Endothelial cell of umbilical vein (primary cell): ENCODE measurements at regions of chr7 and their contacts with region 1.

Region 1: DNA sequence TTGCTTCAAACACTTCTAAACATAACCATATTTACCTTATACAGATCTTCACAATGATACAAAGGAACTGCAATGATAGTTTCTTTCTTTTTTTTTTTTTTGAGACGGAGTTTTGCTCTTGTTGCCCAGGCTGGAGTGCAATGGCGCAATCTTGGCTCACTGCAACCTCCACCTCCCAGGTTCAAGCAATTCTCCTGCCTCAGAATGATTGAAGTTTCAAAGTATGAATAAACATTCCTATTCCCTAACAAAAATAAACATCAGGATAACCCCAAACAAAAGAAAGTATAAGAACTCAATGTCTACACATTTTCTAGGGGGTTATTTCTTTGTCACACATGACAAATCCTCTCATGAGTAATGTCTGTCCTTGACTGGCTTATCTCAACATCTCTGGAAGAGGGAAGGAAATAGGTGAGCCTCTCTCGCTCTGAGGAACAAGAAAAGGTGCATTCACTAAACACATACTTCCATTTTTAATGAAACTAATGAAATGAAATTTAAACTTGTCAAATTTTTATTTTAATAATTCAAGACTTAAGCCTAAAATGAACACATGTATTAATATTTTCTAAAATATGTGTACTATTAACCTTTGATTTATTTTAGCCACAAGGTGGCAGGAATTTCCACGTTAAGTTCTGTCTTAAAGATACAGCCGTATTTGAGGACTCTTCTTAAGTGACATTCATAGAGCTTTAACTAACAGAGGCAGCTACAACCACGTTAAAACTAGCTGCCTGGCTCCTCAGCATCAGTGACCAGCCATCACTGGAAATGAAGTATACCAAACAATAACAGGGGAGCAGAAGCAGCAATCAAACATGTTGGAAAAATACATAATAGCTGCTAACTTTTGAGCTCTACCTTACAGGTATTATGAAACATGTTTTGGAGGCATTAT is 58.3 kb downstream of the MALSU1 start:
- DNase-seq: peak; percentile 81
- H3K4me3 ChIP-seq: peak overlapping the region in 1 of 3 experiments; percentile 44
- H3K27ac ChIP-seq: peak overlapping the region; percentile 53
- H3K4me1 ChIP-seq: peaks cover 44% of the 10 kb centered on the region
- H3K27me3 ChIP-seq: no peaks in the 10 kb centered on the region
- CTCF ChIP-seq: peak; percentile 7
- POLR2A ChIP-seq: peak; percentile 18

Region 2: DNA sequence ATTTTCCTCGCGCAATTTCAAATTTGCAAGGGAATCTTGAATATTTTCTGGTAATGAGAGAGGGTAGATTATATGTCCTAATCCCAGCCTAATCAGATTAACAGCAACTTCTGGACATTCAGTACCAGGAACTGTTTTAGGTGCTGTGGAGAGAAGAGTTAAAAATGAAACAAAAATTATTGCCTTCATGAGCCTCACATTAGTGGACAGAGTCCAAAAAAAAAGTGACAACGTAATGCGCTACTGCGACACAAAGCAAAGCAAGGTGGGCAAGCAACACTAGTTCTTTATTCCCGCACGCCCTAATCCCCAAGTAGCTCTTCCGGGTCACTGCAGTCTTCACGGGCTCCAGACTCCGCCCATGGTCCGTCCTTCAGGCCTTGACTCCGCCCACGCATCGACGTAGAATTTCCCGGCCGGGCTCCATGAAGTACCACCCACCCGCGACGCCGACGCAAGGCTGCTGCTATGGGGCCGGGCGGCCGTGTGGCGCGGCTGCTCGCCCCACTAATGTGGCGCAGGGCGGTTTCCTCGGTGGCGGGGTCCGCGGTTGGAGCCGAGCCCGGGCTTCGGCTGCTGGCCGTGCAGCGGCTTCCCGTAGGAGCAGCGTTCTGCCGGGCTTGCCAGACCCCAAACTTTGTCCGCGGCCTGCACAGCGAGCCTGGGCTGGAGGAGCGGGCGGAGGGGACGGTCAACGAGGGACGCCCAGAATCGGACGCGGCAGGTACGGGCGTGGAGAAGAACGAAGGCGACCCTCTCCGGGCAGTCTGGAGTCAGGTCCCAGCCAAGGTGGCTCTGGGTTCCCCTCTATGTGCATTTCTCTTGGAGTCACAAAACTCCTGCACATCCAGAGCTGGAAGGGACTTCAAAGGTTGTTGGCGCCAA is 58.3 kb before region 1 on chr7 and contains the start of gene MALSU1:
- CTCF ChIA-PET with region 1: interaction called, 7 read pairs
- POLR2A ChIA-PET with region 1: no interaction called
- dilution Hi-C with region 1: no loop called
- intact Hi-C with region 1: loop called (anchors 2 kb)
- DNase-seq: peak; percentile 98
- H3K4me3 ChIP-seq: peak within 1 kb of the TSS; percentile 73 to 81 (median 75)
- H3K27ac ChIP-seq: peak within 1 kb of the TSS; percentile 32
- H3K4me1 ChIP-seq: peaks cover 11% of the 10 kb centered on the region
- H3K27me3 ChIP-seq: no peaks in the 10 kb centered on the region
- CTCF ChIP-seq: no peak
- POLR2A ChIP-seq: peak; percentile 88
- total RNA-seq, gene MALSU1: 58.4 and 62.6 TPM in 2 replicates

Region 3: DNA sequence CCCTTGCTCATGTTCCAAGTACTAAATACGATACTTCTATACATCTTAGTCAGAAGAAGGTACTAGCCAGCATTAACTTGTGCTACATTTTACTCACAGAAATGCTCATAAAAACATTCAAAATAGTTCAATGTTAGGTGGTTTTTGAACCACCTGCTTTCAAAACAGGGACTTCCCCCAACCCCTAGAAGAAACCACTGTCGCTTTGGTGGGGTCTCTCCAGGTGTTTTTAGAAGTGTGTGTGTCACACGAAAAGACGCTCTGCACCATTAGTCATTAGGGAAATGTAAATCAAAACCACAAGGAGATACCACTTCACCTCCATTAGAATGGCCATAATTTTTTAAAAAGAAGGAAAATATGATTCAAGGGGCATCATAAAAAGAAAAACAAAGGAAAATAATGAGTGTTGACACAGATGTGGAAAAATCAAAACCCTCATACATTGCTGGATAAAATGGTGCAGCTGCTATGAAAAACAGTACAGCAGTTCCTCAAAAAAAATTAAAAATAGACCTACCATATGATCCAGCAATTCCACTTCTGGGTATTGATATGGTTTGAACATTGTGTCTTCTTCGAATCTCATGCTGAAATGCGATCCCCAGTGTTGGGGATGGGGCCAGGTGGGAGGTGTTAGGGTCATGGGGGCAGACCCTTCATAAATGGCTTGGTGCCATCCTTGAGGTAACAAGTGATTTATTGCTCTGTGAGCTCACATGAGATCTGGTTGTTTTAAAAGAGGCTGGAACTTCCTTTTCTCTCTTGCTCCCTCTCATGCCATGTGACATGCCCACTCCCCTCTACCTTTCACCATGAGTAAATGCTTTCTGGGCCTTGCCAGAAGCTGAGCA is 15.9 kb after region 1 on chr7:
- CTCF ChIA-PET with region 1: interaction called, 12 read pairs
- POLR2A ChIA-PET with region 1: no interaction called
- dilution Hi-C with region 1: no loop called
- intact Hi-C with region 1: loop called (anchors 1 kb)
- DNase-seq: peak; percentile 92
- H3K4me3 ChIP-seq: no peak overlapping the region
- H3K27ac ChIP-seq: peak overlapping the region; percentile 69
- H3K4me1 ChIP-seq: peaks cover 55% of the 10 kb centered on the region
- H3K27me3 ChIP-seq: no peaks in the 10 kb centered on the region
- CTCF ChIP-seq: no peak
- POLR2A ChIP-seq: peak; percentile 39

Region 4: DNA sequence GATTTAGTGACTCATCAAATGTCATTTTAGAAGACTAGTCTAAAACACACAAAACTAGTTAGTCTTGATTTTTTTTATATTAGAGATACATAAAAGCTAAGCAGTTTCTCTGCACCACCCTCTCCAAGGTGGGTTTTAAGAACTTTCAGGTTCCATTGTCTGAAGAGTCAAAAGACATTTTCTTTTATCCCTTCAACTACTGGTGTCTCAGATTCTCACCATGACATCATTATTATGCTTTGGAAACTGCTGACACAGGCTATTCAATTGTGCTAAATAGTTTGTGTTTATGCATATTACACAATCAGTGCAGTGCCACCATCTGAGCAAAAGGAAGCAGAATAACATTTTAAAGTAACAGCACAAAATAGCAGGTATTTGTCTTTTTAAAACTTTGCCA is 60.6 kb after region 1 on chr7:
- CTCF ChIA-PET with region 1: interaction called, 12 read pairs
- POLR2A ChIA-PET with region 1: no interaction called
- dilution Hi-C with region 1: no loop called
- intact Hi-C with region 1: loop called (anchors 5 kb)
- DNase-seq: peak; percentile 84
- H3K4me3 ChIP-seq: no peak overlapping the region
- H3K27ac ChIP-seq: peak overlapping the region; percentile 32
- H3K4me1 ChIP-seq: peaks cover 26% of the 10 kb centered on the region
- H3K27me3 ChIP-seq: no peaks in the 10 kb centered on the region
- CTCF ChIP-seq: no peak
- POLR2A ChIP-seq: no peak

Region 5: DNA sequence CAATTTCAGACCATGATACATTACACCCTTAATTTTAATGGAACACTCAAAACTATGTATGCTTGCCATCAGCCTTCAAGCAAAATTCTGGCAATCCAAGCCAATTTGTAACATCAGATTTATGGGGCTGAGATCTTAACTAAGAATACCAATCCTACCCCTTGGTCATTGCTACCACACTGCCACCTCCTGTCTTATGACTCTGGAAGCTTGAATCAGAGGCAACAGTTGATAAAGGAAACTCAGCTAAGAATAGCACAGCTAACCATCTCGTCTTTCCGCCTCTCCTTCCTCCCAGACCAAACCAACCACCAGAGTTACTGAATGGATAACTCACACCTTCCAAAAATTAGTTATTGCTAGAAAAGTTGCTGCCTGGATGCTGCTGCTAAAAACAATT is 105.4 kb after region 1 on chr7:
- CTCF ChIA-PET with region 1: interaction called, 6 read pairs
- POLR2A ChIA-PET with region 1: no interaction called
- dilution Hi-C with region 1: no loop called
- intact Hi-C with region 1: loop called (anchors 1 kb)
- DNase-seq: peak; percentile 81
- H3K4me3 ChIP-seq: no peak overlapping the region
- H3K27ac ChIP-seq: peak overlapping the region; percentile 31
- H3K4me1 ChIP-seq: peaks cover 42% of the 10 kb centered on the region
- H3K27me3 ChIP-seq: no peaks in the 10 kb centered on the region
- CTCF ChIP-seq: peak; percentile 25 to 41
- POLR2A ChIP-seq: no peak

Region 6: DNA sequence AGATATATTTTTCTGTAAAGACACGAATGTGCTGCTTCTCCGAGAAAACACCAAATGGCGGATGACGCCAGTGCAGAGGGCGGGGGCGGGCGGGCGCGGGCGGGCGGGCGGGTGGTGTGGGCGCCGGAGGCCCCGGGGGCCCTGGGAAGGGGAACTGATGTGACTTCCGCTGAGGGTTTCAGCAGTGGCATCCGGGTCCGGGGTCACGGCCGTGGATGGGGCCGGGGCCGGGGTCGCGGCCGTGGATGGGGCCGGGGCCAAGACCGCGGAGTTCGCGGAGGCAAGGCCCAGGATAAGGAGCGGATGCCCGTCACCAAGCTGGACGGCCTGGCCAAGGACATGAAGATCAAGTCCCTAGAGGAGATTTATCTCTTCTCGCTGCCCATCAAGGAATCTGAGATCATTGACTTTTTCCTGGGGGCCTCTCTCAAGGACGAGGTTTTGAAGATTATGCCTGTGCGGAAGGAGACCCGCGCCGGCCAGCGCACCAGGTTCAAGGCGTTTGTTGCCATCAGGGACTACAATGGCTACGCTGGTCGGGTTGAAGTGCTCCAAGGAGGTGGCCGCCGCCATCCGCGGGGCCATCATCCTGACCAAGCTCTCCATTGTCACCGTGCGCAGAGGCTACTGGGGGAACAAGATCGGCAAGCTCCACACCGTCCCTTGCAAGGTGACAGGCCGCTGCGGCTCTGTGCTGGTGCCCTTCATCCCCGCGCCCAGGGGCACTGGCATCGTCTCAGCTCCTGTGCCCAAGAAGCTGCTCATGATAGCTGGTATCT is 133.1 kb after region 1 on chr7:
- CTCF ChIA-PET with region 1: interaction called, 10 read pairs
- POLR2A ChIA-PET with region 1: no interaction called
- dilution Hi-C with region 1: no loop called
- intact Hi-C with region 1: no loop called
- DNase-seq: peak; percentile 48
- H3K4me3 ChIP-seq: peak overlapping the region; percentile 6 to 58 (median 45)
- H3K27ac ChIP-seq: peak overlapping the region; percentile 56
- H3K4me1 ChIP-seq: peaks cover 2% of the 10 kb centered on the region
- H3K27me3 ChIP-seq: no peaks in the 10 kb centered on the region
- CTCF ChIP-seq: no peak
- POLR2A ChIP-seq: peak; percentile 47